ENCODE measurements at regions of chr1 and their contacts with region 1.

Region 1: DNA sequence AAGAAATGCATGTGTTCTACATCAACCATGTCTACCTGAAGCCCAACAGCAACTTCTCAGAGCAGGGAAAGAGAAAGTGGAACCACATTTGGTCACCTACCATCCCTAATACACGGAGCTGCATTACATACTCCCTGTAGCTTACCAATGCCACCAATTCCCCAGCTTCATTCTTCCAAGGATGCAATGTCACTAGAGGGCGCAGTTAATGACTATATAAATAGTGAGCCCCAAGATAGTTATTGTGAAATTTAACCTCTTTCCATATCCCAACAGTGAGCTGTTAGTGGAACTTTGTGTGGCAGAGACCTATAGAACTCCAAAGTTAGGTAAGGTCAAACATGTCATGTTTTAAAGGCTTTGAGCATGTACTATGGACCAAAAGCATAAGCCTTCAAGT is 618.3 kb downstream of the SMYD3 start:
- H3K4me3 Mint-ChIP-seq: no peak overlapping the region
- H3K27ac Mint-ChIP-seq: no peak overlapping the region
- H3K4me1 Mint-ChIP-seq: no peaks in the 10 kb centered on the region
- H3K27me3 Mint-ChIP-seq: no peaks in the 10 kb centered on the region

Region 2: DNA sequence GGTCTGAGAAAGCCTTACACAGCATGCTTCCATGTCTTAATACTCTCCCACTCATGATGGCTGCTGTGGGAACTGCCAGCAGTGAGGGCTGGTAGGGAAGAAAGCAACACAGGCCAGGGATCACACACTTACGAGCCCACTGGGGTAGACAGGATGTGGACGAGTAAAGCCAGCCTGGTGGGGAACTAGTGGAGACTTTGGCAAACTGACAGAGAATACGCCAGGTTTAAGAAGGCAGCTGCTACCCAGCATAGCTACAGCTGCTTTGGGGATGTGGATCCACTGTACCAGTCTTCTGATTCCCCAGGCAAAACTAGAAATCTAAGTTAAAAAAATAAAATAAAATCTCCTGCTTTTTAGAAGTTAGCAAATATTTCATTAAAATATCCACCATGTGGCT is 45.7 kb before region 1 on chr1:
- intact Hi-C with region 1: no loop called
- H3K4me3 Mint-ChIP-seq: no peak overlapping the region
- H3K27ac Mint-ChIP-seq: no peak overlapping the region
- H3K4me1 Mint-ChIP-seq: no peaks in the 10 kb centered on the region
- H3K27me3 Mint-ChIP-seq: no peaks in the 10 kb centered on the region

Region 3: GRCh38 chr1:246002725-246003441 is 114.1 kb after region 1 on chr1:
- intact Hi-C with region 1: loop called (anchors 5 kb)
- H3K4me3 Mint-ChIP-seq: no peak overlapping the region
- H3K27ac Mint-ChIP-seq: no peak overlapping the region
- H3K4me1 Mint-ChIP-seq: no peaks in the 10 kb centered on the region
- H3K27me3 Mint-ChIP-seq: no peaks in the 10 kb centered on the region

Region 4: DNA sequence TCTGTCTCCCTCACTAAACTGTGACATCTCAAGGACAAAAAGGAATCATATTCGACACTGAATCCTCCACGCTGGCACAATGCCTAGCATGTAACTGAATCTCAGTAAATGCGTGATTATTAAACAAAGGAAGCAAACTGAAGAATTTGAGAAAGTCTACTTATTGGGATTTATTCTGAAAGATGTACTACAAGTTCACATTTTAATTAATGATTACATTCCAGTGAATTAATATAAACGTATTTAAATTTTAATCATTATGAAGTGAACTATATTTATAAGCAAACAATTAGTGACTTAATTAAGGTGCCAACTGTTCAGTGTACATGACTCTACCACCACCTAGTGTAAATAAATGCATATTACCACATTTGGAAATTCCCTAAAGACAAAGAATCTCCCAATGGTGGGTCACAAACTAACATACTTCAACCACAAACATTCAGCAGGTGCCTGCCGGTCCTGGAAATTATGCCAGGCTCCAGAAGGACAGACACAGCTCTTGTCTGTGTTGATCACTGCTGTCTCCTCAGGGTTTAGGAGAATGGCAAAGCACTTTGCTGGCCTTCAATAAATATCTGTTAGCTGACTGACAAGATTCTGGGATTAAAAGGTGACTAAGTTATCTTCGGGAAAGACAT is 561.9 kb after region 1 on chr1:
- intact Hi-C with region 1: loop called (anchors 10 kb)
- H3K4me3 Mint-ChIP-seq: no peak overlapping the region
- H3K27ac Mint-ChIP-seq: no peak overlapping the region
- H3K4me1 Mint-ChIP-seq: peaks cover 6% of the 10 kb centered on the region
- H3K27me3 Mint-ChIP-seq: no peaks in the 10 kb centered on the region

Measured in dendritic cell treated with granulocyte-macrophage colony-stimulating factor and Interleukin-4, amounts not matched to agents 40 ng/mL and 50 ng/mL, for 4 days (primary cell).